Caco-2 (cell line): ENCODE measurements at regions of chr20 and their contacts with region 1.

Region 1: GRCh38 chr20:56202493-56203077 is 45.9 kb upstream of the MC3R start:
- DNase-seq: peak in 1 of 2 experiments; percentile 39
- H3K4me3 ChIP-seq: no peak overlapping the region
- H3K4me3 Mint-ChIP-seq: no peak overlapping the region
- H3K27ac Mint-ChIP-seq: no peak overlapping the region
- H3K4me1 ChIP-seq: no peaks in the 10 kb centered on the region; the same call in 1 of the 2 replicates
- H3K4me1 Mint-ChIP-seq: no peaks in the 10 kb centered on the region
- H3K27me3 ChIP-seq: no peaks in the 10 kb centered on the region
- H3K27me3 Mint-ChIP-seq: no peaks in the 10 kb centered on the region
- CTCF ChIP-seq: peak; percentile 60 to 69

Region 2: GRCh38 chr20:55437798-55438415 is 764.7 kb before region 1 on chr20:
- CTCF ChIA-PET with region 1: interaction called, 10 read pairs
- POLR2A ChIA-PET with region 1: no interaction called
- intact Hi-C with region 1: no loop called
- DNase-seq: no peak
- H3K4me3 ChIP-seq: no peak overlapping the region
- H3K4me3 Mint-ChIP-seq: no peak overlapping the region
- H3K27ac Mint-ChIP-seq: no peak overlapping the region
- H3K4me1 ChIP-seq: no peaks in the 10 kb centered on the region
- H3K4me1 Mint-ChIP-seq: no peaks in the 10 kb centered on the region
- H3K27me3 ChIP-seq: no peaks in the 10 kb centered on the region
- H3K27me3 Mint-ChIP-seq: peaks cover 6% of the 10 kb centered on the region
- CTCF ChIP-seq: no peak